Mammary epithelial cell (primary cell): ENCODE measurements at regions of chr18 and their contacts with region 1.

Region 1: DNA sequence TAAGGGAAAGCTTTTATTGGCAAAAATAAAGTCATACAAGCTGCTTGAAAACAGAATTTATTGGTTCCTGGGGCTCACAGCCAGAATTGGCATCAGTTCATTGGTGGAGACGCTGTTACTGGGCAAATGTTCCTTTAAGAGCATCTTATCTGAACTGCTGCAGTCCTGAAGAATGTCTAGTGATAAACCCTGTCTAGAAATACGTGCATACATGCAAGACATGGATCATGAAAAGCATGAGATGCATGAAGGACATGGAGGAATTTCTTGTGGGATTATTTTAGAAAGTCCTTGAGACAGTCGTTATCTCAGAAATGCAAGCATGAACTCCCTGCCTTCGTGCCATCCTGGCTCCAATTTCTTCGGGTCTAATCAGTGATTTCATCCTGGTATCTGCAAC is 32.5 kb upstream of the FHOD3 start:
- DNase-seq: no peak
- H3K4me3 ChIP-seq: no peak overlapping the region
- H3K27ac ChIP-seq: no peak overlapping the region
- H3K4me1 ChIP-seq: no peaks in the 10 kb centered on the region
- H3K27me3 ChIP-seq: no peaks in the 10 kb centered on the region
- CTCF ChIP-seq: no peak

Region 2: DNA sequence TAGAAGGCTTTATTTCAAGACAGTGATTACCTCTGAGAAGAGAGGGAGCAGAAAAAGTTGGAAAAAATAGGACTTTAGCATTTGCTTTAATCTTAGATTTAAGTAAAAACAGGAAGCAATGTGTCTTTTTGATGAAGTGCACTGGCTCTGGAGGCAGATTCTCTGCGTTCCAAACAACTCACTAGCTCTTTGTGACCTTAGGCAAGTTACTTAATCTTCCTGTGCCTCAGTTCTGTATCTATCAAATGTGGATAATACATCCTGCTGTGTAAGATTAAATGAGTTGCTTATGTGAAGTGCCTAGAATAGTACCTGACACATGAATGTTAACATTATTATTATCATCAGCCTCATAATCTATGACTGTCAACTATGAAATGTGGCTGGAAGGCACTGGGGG is 240.0 kb before region 1 on chr18:
- CTCF ChIA-PET with region 1: no interaction called
- dilution Hi-C with region 1: loop called (anchors 10 kb)
- in situ Hi-C with region 1: no loop called
- intact Hi-C with region 1: no loop called
- DNase-seq: peak; percentile 11
- H3K4me3 ChIP-seq: no peak overlapping the region
- H3K27ac ChIP-seq: peak overlapping the region; percentile 29
- H3K4me1 ChIP-seq: peaks cover 8% of the 10 kb centered on the region
- H3K27me3 ChIP-seq: no peaks in the 10 kb centered on the region
- CTCF ChIP-seq: no peak

Region 3: DNA sequence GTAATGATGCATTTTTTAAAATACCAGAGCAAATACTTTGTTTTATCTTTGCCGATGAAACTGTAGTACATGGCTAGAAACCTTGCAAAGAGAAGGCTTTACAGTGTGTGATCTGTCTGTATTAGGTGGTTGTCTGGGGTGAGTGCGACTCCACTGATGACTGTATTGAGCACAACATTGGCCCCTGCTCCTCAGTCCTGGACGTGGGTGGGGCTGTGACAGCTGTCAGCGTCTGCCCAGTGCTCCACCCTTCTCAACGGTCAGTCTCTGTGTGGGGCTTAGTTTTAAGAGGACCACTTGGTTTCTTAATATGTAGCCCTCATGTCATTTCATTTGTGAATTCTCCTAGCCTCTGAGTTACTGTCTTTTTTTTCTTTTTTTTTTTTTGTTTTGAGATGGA is 95.1 kb before region 1 on chr18:
- CTCF ChIA-PET with region 1: no interaction called
- dilution Hi-C with region 1: loop called (anchors 5 kb)
- in situ Hi-C with region 1: no loop called
- intact Hi-C with region 1: no loop called
- DNase-seq: no peak
- H3K4me3 ChIP-seq: no peak overlapping the region
- H3K27ac ChIP-seq: no peak overlapping the region
- H3K4me1 ChIP-seq: no peaks in the 10 kb centered on the region
- H3K27me3 ChIP-seq: no peaks in the 10 kb centered on the region
- CTCF ChIP-seq: no peak

Region 4: GRCh38 chr18:36593001-36593400 is 328.0 kb after region 1 on chr18:
- CTCF ChIA-PET with region 1: no interaction called
- dilution Hi-C with region 1: no loop called
- in situ Hi-C with region 1: no loop called
- intact Hi-C with region 1: no loop called
- DNase-seq: peak; percentile 78
- H3K4me3 ChIP-seq: no peak overlapping the region
- H3K27ac ChIP-seq: peak overlapping the region; percentile 27
- H3K4me1 ChIP-seq: peaks cover 55% of the 10 kb centered on the region
- H3K27me3 ChIP-seq: no peaks in the 10 kb centered on the region
- CTCF ChIP-seq: no peak